ENCODE measurements at regions of chr9 and their contacts with region 1.

Region 1: GRCh38 chr9:127224178-127224882 is 40.2 kb upstream of the GARNL3 start:
- DNase-seq: peak; percentile 93
- H3K4me3 ChIP-seq: peak overlapping the region; percentile 67 to 76
- H3K27ac ChIP-seq: peak overlapping the region; percentile 79 to 81
- H3K4me1 ChIP-seq: no peaks in the 10 kb centered on the region
- H3K27me3 ChIP-seq: no peaks in the 10 kb centered on the region
- CTCF ChIP-seq: peak in 3 of 4 experiments; percentile 10 to 19 (median 17)
- POLR2A ChIP-seq: peak; percentile 57

Region 2: DNA sequence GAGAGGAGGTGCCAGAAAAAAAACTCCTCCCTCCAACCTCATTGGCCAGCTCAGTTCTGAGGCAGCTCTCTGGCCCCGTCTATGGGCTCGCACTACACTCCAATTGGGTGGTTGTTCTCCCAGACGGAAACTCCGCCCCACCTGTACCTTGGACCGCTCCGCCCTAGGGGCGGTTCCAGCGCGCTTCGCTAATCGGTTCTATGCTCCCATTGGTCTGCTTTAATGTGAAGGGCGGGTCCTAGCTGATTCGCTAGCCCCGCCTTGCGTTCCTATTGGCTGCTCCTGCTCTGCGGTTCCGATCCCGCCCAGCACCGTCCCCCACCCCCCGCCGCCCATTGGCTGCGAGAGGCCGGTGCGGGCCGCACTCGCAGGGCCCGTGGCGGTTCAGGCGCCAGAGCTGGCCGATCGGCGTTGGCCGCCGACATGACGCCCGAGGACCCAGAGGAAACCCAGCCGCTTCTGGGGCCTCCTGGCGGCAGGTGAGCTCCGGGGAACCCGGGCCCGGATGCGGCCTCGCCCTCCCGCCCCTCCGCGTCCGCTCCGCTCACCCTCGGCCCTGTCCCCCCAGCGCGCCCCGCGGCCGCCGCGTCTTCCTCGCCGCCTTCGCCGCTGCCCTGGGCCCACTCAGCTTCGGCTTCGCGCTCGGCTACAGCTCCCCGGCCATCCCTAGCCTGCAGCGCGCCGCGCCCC is 172.6 kb after region 1 on chr9 and contains the start of gene SLC2A8:
- intact Hi-C with region 1: loop called (anchors 5 kb)
- DNase-seq: peak; percentile 100
- H3K4me3 ChIP-seq: peak within 1 kb of the TSS; percentile 77 to 91
- H3K27ac ChIP-seq: peak within 1 kb of the TSS; percentile 73 to 79
- H3K4me1 ChIP-seq: peaks cover 4% of the 10 kb centered on the region
- H3K27me3 ChIP-seq: no peaks in the 10 kb centered on the region
- CTCF ChIP-seq: peak in 2 of 4 experiments; percentile 32 to 47
- POLR2A ChIP-seq: peak; percentile 78
- total RNA-seq, gene SLC2A8: 29.3 to 69.3 TPM

Region 3: GRCh38 chr9:127987103-127987614 is 762.8 kb after region 1 on chr9:
- intact Hi-C with region 1: no loop called
- DNase-seq: no peak
- H3K4me3 ChIP-seq: no peak overlapping the region
- H3K27ac ChIP-seq: no peak overlapping the region
- H3K4me1 ChIP-seq: no peaks in the 10 kb centered on the region
- H3K27me3 ChIP-seq: no peaks in the 10 kb centered on the region
- CTCF ChIP-seq: no peak
- POLR2A ChIP-seq: no peak